AG04450 (cell line): ENCODE measurements at regions of chr3 and their contacts with region 1.

Region 1: GRCh38 chr3:157532529-157533297 is 29.5 kb upstream of the VEPH1 start:
- DNase-seq: peak; percentile 71
- H3K4me3 ChIP-seq: peak overlapping the region; percentile 52
- H3K27ac ChIP-seq: peak overlapping the region; percentile 86
- H3K27me3 ChIP-seq: no peaks in the 10 kb centered on the region
- CTCF ChIP-seq: peak; percentile 85

Region 2: GRCh38 chr3:157232146-157232545 is 300.6 kb before region 1 on chr3:
- CTCF ChIA-PET with region 1: interaction called, 10 read pairs
- POLR2A ChIA-PET with region 1: no interaction called
- DNase-seq: no peak
- H3K4me3 ChIP-seq: no peak overlapping the region
- H3K27ac ChIP-seq: no peak overlapping the region
- H3K27me3 ChIP-seq: no peaks in the 10 kb centered on the region
- CTCF ChIP-seq: no peak

Region 3: DNA sequence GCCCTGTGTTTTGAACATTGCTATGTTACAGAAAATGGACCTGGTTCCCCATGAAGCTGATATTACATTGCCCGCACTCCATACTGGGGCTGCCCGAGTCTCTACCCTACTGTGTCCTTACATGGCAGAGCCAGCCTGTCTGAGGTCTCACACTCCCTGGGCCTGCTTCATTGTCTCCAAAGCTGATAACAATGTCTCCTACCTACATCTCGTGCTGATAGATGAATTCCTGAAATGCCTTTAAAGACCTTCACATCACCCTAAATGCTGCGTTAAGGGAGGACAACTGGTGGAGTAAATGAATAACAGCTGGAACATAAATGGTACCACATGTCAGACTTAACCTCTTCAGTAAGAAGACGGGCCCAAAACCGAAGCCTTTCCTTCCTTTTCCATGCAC is 158.9 kb before region 1 on chr3:
- CTCF ChIA-PET with region 1: no interaction called
- POLR2A ChIA-PET with region 1: no interaction called
- DNase-seq: no peak
- H3K4me3 ChIP-seq: no peak overlapping the region
- H3K27ac ChIP-seq: no peak overlapping the region
- H3K27me3 ChIP-seq: no peaks in the 10 kb centered on the region
- CTCF ChIP-seq: no peak

Region 4: GRCh38 chr3:157388976-157389375 is 143.7 kb before region 1 on chr3:
- CTCF ChIA-PET with region 1: no interaction called
- POLR2A ChIA-PET with region 1: no interaction called
- DNase-seq: peak; percentile 21
- H3K4me3 ChIP-seq: no peak overlapping the region
- H3K27ac ChIP-seq: no peak overlapping the region
- H3K27me3 ChIP-seq: no peaks in the 10 kb centered on the region
- CTCF ChIP-seq: no peak

Region 5: DNA sequence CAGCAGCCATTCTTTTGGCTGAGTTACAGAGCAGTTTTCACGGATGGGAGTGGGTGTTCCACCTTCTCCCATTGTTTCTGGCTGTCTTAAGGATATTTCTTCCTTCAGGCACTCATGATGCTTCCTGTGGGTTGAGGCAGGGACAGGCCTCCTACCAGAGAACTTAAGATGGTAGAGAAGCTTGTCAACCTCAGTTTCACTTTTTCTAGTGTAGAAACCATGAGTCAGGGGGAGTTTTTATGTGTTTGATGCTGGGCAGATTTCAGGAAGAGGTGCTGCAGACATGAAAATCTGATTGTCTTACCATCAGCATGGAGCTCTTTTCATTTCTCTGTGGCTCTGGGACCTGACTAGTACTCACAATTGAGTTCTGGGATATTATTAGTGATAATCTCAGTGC is 19.2 kb after region 1 on chr3:
- CTCF ChIA-PET with region 1: interaction called, 10 read pairs
- POLR2A ChIA-PET with region 1: no interaction called
- DNase-seq: no peak
- H3K4me3 ChIP-seq: no peak overlapping the region
- H3K27ac ChIP-seq: no peak overlapping the region
- H3K27me3 ChIP-seq: no peaks in the 10 kb centered on the region
- CTCF ChIP-seq: no peak

Region 6: DNA sequence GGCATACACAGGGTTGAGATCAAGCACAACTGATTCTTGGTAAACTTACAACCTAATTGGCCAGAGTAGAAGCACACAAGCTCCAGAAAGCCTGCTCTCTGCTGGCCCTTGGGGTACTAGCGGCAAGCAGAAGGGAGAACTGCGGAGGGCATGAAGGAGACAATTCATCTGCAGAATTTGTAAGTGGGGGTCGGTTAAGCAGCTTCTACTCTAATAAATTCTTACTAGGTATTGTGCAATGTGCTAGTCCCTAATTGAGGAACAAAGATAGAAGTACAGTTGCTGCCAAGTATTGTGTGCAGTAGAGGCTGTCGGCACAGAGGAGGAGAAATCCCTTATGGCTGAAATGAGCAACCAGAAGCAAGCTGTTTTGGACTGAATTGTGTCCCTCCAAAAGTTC is 61.7 kb after region 1 on chr3:
- CTCF ChIA-PET with region 1: interaction called, 32 read pairs
- POLR2A ChIA-PET with region 1: no interaction called
- DNase-seq: no peak
- H3K4me3 ChIP-seq: no peak overlapping the region
- H3K27ac ChIP-seq: no peak overlapping the region
- H3K27me3 ChIP-seq: peaks cover 29% of the 10 kb centered on the region
- CTCF ChIP-seq: peak; percentile 31; the same call in 1 of the 2 replicates

Region 7: GRCh38 chr3:157785102-157785826 is 252.6 kb after region 1 on chr3:
- CTCF ChIA-PET with region 1: interaction called, 12 read pairs
- POLR2A ChIA-PET with region 1: no interaction called
- DNase-seq: peak; percentile 82
- H3K4me3 ChIP-seq: no peak overlapping the region
- H3K27ac ChIP-seq: peak overlapping the region; percentile 43
- H3K27me3 ChIP-seq: no peaks in the 10 kb centered on the region
- CTCF ChIP-seq: no peak